BJ (cell line): ENCODE measurements at regions of chr7 and their contacts with region 1.

Region 1: GRCh38 chr7:29921404-29922010 is 68.1 kb downstream of the SCRN1 start:
- DNase-seq: no peak
- H3K4me3 ChIP-seq: no peak overlapping the region
- H3K27me3 ChIP-seq: no peaks in the 10 kb centered on the region
- CTCF ChIP-seq: peak; percentile 89

Region 2: GRCh38 chr7:29639881-29640595 is 281.5 kb before region 1 on chr7:
- CTCF ChIA-PET with region 1: interaction called, 10 read pairs
- POLR2A ChIA-PET with region 1: no interaction called
- DNase-seq: no peak
- H3K4me3 ChIP-seq: no peak overlapping the region
- H3K27me3 ChIP-seq: no peaks in the 10 kb centered on the region
- CTCF ChIP-seq: no peak

Region 3: DNA sequence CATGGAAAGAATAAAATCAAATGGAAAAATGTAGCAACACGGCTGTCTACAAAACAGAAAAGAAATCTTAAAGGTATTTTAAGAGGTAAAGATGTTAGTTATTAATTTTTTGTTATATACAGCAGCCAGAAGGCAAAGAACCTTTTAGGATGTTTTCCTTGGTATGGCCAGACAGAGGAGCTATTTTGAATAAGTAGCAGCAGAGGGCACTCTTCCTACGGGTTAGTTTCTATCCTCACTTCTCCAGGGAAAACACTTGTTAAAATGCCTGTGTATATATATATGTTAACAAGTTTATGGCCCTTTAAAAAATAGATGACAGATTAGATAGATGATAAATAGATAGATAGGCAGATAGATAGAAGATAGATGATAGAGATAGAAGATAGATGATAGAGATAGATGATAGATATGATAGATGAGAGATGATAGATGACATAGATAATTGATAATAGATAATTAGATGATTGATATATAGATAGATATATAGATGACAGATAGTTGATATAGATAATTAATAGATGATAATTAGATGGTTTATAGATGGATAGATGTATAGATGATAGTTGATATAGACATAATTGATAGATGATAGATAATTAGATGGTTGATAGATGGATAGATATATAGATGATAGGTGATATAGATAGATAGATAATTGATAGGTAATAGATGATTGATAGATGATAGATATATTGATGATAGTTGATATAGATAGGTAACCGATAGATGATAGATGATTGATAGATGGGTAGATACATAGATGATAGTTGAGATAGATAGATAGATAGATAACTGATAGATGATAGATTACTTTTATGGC is 173.0 kb before region 1 on chr7:
- CTCF ChIA-PET with region 1: interaction called, 22 read pairs
- POLR2A ChIA-PET with region 1: no interaction called
- DNase-seq: no peak
- H3K4me3 ChIP-seq: no peak overlapping the region
- H3K27me3 ChIP-seq: no peaks in the 10 kb centered on the region
- CTCF ChIP-seq: peak; percentile 58

Region 4: GRCh38 chr7:29878081-29878688 is 43.3 kb before region 1 on chr7:
- CTCF ChIA-PET with region 1: interaction called, 19 read pairs
- POLR2A ChIA-PET with region 1: no interaction called
- DNase-seq: no peak
- H3K4me3 ChIP-seq: no peak overlapping the region
- H3K27me3 ChIP-seq: 0 out of 2 replicates have a peak, but pooled peaks cover 4% of the 10 kb centered on the region
- CTCF ChIP-seq: peak; percentile 59

Region 5: GRCh38 chr7:30029696-30030095 is 108.2 kb after region 1 on chr7:
- CTCF ChIA-PET with region 1: no interaction called
- POLR2A ChIA-PET with region 1: no interaction called
- DNase-seq: no peak
- H3K4me3 ChIP-seq: peak overlapping the region; percentile 79
- H3K27me3 ChIP-seq: no peaks in the 10 kb centered on the region
- CTCF ChIP-seq: 0 out of 2 replicates have a peak, but pooled peaks have one; percentile 3

Region 6: DNA sequence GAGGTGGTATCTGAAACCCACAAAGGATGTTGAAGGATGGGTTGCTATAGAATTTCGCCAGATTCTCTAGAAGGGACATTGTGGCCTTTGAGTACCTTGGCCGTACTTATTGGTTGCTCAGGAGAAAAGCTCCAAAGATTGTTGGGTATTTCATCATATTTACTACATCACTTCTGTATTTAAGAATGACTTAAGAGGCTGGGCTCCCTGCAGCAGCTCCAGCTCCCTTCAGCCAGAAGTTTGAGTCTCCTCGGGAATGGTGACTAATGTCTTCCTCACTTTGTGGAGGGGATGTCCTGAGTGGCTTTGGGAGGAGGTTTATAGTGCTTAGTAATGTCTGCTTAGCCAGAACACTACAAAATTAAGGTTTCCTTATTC is 867.8 kb after region 1 on chr7:
- CTCF ChIA-PET with region 1: no interaction called
- POLR2A ChIA-PET with region 1: no interaction called
- DNase-seq: peak; percentile 67
- H3K4me3 ChIP-seq: no peak overlapping the region
- H3K27me3 ChIP-seq: no peaks in the 10 kb centered on the region
- CTCF ChIP-seq: no peak